PC-3 (cell line): ENCODE measurements at regions of chr6 and their contacts with region 1.

Region 1: DNA sequence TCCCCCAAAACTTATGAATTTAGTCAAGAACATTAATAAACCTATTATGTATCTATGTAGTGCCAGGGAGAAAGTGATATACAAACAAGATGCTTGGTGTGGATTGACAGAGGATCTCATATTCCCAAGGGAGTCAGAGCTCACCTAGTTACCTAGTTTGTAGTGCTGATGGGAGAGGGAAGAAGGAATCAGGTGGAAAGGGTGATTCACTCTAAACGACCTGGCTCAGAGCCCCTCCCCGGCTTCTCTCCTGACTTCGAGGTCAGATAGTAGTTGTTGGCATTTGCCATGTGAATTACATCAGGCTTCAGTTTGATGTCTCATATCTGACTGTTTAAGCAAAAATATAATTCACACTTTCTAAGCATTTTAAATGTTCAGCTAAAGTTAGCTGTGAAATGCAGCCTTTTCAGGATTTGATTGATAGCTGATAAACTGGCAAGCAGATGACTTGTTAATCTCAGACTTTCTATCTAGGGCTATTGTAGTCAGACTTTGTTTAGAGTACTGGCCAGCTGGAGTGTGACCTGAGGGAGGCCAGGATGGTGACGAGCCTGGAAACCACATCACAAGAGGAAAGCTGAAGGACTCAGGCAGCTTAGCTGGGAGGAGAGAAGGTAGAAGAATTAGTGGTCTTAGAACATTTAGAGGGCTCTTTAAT is 123.7 kb downstream of the AKAP7 start:
- DNase-seq: peak; percentile 63
- ATAC-seq: peak; percentile 59
- H3K4me3 ChIP-seq: no peak overlapping the region
- H3K27ac ChIP-seq: peak overlapping the region; percentile 91
- H3K4me1 ChIP-seq: peaks cover 37% of the 10 kb centered on the region
- H3K27me3 ChIP-seq: no peaks in the 10 kb centered on the region
- CTCF ChIP-seq: no peak

Region 2: DNA sequence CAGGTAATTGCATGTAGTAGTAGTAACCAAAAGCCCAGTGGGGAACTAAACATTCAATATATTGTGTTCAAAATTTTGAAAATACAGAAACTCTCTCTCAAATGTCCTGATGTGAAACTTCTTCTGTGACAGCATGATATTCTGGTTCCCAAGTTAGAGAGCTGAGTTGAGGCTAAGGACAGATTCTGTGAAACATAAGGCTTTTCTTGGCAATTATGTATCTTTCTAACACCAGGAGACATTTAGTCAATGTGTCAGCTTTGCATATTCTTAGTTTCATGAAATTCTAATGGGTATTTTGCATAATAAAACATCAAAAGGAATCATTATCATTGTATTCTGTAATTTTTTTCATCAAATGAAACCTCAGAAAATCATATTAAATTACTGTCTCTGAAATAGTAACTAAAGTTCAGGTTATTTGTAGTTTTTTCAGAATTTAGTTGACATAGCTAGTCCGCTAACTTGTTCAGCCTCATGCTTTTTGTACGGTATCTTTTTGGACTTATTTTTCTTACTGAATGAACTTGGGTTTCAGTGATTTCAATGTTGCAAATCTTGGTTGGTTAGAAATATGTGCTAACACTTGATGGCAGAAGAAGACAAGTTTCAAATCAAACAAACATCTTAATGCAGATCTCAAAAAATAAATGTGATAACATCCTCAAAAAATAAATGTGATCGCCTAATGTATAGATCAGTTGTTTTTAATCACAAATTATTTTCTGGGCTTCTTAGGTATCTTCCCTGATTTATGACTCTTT is 53.3 kb before region 1 on chr6:
- CTCF ChIA-PET with region 1: no interaction called
- POLR2A ChIA-PET with region 1: no interaction called
- intact Hi-C with region 1: loop called (anchors 5 kb)
- DNase-seq: no peak
- ATAC-seq: no peak
- H3K4me3 ChIP-seq: no peak overlapping the region
- H3K27ac ChIP-seq: no peak overlapping the region
- H3K4me1 ChIP-seq: no peaks in the 10 kb centered on the region
- H3K27me3 ChIP-seq: no peaks in the 10 kb centered on the region
- CTCF ChIP-seq: no peak

Region 3: DNA sequence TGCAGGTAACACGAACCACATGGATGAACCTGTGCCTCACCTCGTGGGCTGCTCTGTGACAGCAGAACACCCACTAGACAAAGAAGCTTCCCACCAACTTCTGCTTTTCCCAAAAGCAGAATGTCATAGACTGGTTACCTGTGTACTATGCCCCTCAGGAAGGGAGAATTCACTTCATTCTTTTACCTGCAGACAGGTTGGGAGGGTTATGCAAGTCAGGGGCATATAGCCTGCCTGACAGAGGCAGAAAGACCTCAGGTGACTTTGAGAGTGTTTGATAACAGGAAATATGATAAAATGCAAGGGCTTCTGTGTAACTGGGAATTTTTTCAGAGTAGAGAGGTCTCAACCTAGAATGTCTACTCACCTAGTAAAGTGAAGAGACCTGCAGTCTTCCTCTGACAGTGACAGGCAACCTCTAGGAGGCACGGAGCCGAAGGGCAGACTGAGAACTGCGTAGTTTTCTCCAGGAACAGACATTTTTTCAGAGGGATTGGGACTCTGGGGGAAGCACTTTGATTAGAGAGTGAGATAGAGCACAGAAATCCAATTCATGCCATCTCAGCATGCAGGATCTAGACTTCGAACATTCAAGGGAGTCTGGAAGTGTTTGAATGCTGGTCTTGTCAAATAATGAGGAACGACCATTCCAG is 89.5 kb after region 1 on chr6:
- CTCF ChIA-PET with region 1: no interaction called
- POLR2A ChIA-PET with region 1: no interaction called
- intact Hi-C with region 1: no loop called
- DNase-seq: no peak
- ATAC-seq: no peak
- H3K4me3 ChIP-seq: no peak overlapping the region
- H3K27ac ChIP-seq: no peak overlapping the region
- H3K4me1 ChIP-seq: no peaks in the 10 kb centered on the region
- H3K27me3 ChIP-seq: peaks cover 11% of the 10 kb centered on the region; the same call in 1 of the 2 replicates
- CTCF ChIP-seq: no peak

Region 4: DNA sequence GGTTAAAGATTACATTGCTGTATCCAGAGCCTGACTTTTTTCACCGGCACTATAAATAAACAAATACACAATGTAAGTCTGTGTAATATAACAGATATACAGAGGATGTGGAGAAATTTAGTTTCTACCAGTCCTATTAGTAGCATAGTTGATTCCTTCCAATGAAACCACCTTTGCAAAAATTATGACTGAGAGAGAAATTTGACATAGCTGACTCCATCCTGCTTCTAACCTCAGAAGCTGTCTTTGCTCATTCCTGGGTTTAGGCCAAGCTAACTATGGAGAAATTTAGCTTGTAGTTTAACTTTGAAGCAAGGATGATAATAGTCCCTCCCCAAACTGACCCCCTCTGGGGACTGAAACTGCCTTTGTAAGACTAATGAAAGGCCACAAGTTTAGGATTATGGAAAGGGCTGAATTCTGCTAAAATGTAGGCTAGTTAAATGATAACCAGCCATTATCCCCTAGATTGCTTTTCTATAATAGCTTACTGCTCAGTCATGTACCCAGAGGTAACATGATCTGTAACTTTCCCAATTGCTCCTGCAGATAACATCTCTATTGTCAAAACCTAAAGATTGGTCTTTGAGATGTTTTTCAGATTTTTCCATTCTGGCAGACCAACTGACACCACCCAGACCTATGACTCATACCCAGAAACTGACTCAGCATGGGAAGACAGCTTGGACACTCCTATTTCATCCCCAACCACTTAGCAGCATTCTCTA is 141.3 kb after region 1 on chr6:
- CTCF ChIA-PET with region 1: no interaction called
- POLR2A ChIA-PET with region 1: interaction called, 15 read pairs
- intact Hi-C with region 1: no loop called
- DNase-seq: peak; percentile 84
- ATAC-seq: peak; percentile 91
- H3K4me3 ChIP-seq: no peak overlapping the region
- H3K27ac ChIP-seq: peak overlapping the region; percentile 67
- H3K4me1 ChIP-seq: peaks cover 17% of the 10 kb centered on the region
- H3K27me3 ChIP-seq: no peaks in the 10 kb centered on the region
- CTCF ChIP-seq: no peak

Region 5: GRCh38 chr6:131694831-131695426 is 436.0 kb after region 1 on chr6:
- CTCF ChIA-PET with region 1: no interaction called
- POLR2A ChIA-PET with region 1: no interaction called
- intact Hi-C with region 1: no loop called
- DNase-seq: peak; percentile 77
- ATAC-seq: peak; percentile 85
- H3K4me3 ChIP-seq: no peak overlapping the region
- H3K27ac ChIP-seq: no peak overlapping the region
- H3K4me1 ChIP-seq: no peaks in the 10 kb centered on the region
- H3K27me3 ChIP-seq: no peaks in the 10 kb centered on the region
- CTCF ChIP-seq: peak; percentile 78